ENCODE measurements at regions of chr3 and their contacts with region 1.

Region 1: DNA sequence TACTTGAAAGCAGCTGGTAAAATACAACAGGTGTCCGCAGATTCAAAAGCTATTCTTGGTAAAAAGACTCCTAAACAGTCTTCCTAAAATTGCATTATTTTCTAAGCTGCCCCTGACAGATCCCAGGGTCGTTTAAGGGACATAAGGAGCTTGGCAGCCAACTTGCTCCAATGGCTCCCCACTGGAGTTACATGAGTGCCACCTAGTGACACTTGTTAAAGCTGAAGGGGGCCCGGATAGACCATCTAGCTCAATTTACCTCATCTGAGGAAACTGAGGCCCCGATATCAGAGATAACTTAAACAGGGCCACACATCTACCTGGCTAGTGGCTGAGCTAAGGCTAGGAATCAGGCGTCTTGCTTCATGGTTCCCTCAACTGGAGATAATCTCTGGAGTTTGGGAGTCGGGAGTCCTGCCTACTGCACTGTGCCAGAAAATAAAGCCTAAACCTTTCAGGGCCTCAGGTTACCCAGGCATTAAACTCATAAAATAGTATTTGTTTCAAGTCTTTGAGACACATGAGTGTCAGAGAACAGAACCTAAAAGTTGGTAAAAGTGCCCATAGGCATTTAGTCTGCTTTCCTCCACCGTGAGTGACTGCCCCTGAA is 6.5 kb upstream of the TBC1D23 start:
- DNase-seq: no peak
- ATAC-seq: peak; percentile 95
- H3K4me3 ChIP-seq: no peak overlapping the region
- H3K27ac ChIP-seq: no peak overlapping the region
- H3K4me1 ChIP-seq: no peaks in the 10 kb centered on the region
- H3K27me3 ChIP-seq: no peaks in the 10 kb centered on the region
- CTCF ChIP-seq: peak; percentile 75 to 83 (median 78)
- EP300 ChIP-seq: no peak
- POLR2A ChIP-seq: no peak
- RAD21 ChIP-seq: peak; percentile 99

Region 2: DNA sequence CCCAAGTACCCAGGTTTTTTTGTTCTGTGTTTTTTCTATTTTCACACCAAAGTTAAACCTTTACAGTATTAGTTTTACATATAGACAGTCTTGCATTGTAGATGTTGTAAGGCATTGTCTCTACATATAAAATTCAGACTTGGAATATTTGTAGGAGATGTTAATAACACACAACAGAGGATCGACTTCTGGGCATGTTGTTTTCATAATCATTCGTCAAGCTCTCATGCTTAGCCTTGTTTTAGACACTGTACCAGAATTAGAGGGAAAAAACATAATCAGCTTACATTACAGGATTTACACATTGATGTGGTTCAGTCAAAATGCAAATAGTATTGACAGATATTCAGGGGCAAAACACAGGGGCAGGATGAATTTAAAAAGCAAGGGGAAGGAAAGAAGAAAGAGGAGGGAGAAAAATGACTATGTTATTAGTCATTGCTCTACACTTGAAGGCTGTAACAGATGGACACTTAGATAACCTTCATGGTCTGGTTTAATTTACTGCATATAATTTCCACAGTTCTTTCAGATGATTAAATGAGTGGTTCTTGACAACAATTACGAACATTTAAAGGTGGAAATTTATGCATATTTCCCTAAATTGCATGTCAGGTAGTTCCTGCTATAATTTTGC is 429.2 kb before region 1 on chr3:
- CTCF ChIA-PET with region 1: interaction called, 73 read pairs
- POLR2A ChIA-PET with region 1: no interaction called
- RAD21 ChIA-PET with region 1: interaction called, 6 read pairs
- SMC1A ChIA-PET with region 1: interaction called, 7 read pairs
- in situ Hi-C with region 1: no loop called
- intact Hi-C with region 1: no loop called
- DNase-seq: no peak
- ATAC-seq: no peak; the same call in 2 of the 3 replicates
- H3K4me3 ChIP-seq: no peak overlapping the region
- H3K27ac ChIP-seq: no peak overlapping the region
- H3K4me1 ChIP-seq: no peaks in the 10 kb centered on the region
- H3K27me3 ChIP-seq: no peaks in the 10 kb centered on the region
- CTCF ChIP-seq: no peak
- EP300 ChIP-seq: no peak
- POLR2A ChIP-seq: no peak
- RAD21 ChIP-seq: no peak

Region 3: GRCh38 chr3:100060685-100061484 is 193.4 kb before region 1 on chr3:
- CTCF ChIA-PET with region 1: interaction called, 13 read pairs
- POLR2A ChIA-PET with region 1: no interaction called
- RAD21 ChIA-PET with region 1: interaction called, 6 read pairs
- SMC1A ChIA-PET with region 1: interaction called, 5 read pairs
- in situ Hi-C with region 1: loop called (anchors 5 kb)
- intact Hi-C with region 1: no loop called
- DNase-seq: no peak
- ATAC-seq: peak; percentile 32; the same call in 2 of the 3 replicates
- H3K4me3 ChIP-seq: no peak overlapping the region
- H3K27ac ChIP-seq: no peak overlapping the region
- H3K4me1 ChIP-seq: no peaks in the 10 kb centered on the region; the same call in 1 of the 2 replicates
- H3K27me3 ChIP-seq: no peaks in the 10 kb centered on the region
- CTCF ChIP-seq: no peak
- EP300 ChIP-seq: no peak
- POLR2A ChIP-seq: no peak
- RAD21 ChIP-seq: no peak

Region 4: DNA sequence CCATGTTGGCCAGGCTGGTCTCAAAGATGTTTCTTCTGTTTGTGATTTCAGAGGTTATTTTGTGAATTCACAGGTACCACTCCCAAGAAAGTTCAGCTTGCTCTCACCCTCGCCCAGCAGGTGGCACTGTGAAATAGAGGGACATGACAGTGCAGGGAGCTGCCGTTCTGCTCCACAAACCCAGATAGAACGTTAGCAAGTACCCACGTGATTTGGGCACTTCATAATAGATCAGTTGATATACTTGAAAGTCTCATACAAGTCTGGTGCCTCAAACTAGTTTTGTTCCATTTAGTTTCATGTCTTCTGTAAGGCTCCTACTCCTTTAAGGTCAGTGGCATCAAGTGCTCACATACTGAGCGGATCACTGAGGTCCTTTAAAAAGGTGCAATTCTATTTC is 185.4 kb before region 1 on chr3:
- CTCF ChIA-PET with region 1: interaction called, 112 read pairs
- POLR2A ChIA-PET with region 1: interaction called, 3 read pairs
- RAD21 ChIA-PET with region 1: interaction called, 42 read pairs
- SMC1A ChIA-PET with region 1: interaction called, 47 read pairs
- in situ Hi-C with region 1: loop called (anchors 5 kb)
- intact Hi-C with region 1: loop called (anchors 1 kb)
- DNase-seq: peak; percentile 33
- ATAC-seq: peak; percentile 96
- H3K4me3 ChIP-seq: no peak overlapping the region
- H3K27ac ChIP-seq: no peak overlapping the region
- H3K4me1 ChIP-seq: peaks cover 16% of the 10 kb centered on the region
- H3K27me3 ChIP-seq: no peaks in the 10 kb centered on the region
- CTCF ChIP-seq: peak; percentile 74 to 79 (median 79)
- EP300 ChIP-seq: no peak
- POLR2A ChIP-seq: no peak
- RAD21 ChIP-seq: peak; percentile 92

Region 5: DNA sequence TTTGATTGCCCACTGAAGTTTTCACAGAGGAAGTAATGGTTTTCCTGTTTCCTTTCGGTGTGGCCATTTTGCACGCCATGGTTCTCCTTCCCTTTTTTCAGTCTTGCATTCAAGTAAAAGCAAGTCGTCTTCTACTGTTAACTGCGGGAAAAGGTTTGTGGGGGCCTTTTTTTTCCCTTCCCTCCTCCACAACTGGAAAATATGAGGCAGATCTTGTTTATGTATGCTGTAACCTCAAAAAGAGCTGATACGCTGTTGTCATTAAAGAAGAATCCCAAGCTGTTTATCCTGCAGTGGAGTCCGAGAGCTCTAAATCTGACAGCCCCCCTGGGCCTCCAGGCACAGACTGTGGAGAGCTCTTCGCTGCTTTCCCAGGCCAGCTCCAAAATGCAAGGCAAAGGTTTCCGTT is 180.4 kb before region 1 on chr3:
- CTCF ChIA-PET with region 1: interaction called, 112 read pairs
- POLR2A ChIA-PET with region 1: interaction called, 3 read pairs
- RAD21 ChIA-PET with region 1: interaction called, 42 read pairs
- SMC1A ChIA-PET with region 1: interaction called, 47 read pairs
- in situ Hi-C with region 1: loop called (anchors 5 kb)
- intact Hi-C with region 1: no loop called
- DNase-seq: no peak
- ATAC-seq: peak; percentile 12; the same call in 2 of the 3 replicates
- H3K4me3 ChIP-seq: peak overlapping the region; percentile 48; the same call in 1 of the 2 replicates
- H3K27ac ChIP-seq: no peak overlapping the region
- H3K4me1 ChIP-seq: peaks cover 21% of the 10 kb centered on the region
- H3K27me3 ChIP-seq: no peaks in the 10 kb centered on the region
- CTCF ChIP-seq: no peak
- EP300 ChIP-seq: peak; percentile 14 to 39; a peak in 2 of 4 replicates
- POLR2A ChIP-seq: no peak
- RAD21 ChIP-seq: no peak

Region 6: GRCh38 chr3:100089812-100090668 is 164.2 kb before region 1 on chr3:
- CTCF ChIA-PET with region 1: interaction called, 11 read pairs
- POLR2A ChIA-PET with region 1: no interaction called
- RAD21 ChIA-PET with region 1: interaction called, 5 read pairs
- SMC1A ChIA-PET with region 1: interaction called, 5 read pairs
- in situ Hi-C with region 1: no loop called
- intact Hi-C with region 1: no loop called
- DNase-seq: no peak
- ATAC-seq: peak; percentile 90
- H3K4me3 ChIP-seq: no peak overlapping the region
- H3K27ac ChIP-seq: no peak overlapping the region
- H3K4me1 ChIP-seq: peaks cover 18% of the 10 kb centered on the region
- H3K27me3 ChIP-seq: no peaks in the 10 kb centered on the region
- CTCF ChIP-seq: peak; percentile 32 to 73 (median 72)
- EP300 ChIP-seq: no peak
- POLR2A ChIP-seq: no peak
- RAD21 ChIP-seq: peak; percentile 67